Posterior cingulate gyrus (tissue), 11 donors: ENCODE measurements at regions of chr6 and their contacts with region 1.

Region 1: GRCh38 chr6:44237813-44238433 is 9.0 kb upstream of the HSP90AB1 start:
- DNase-seq: peak; percentile 56 to 97 (median 84)

Region 2: DNA sequence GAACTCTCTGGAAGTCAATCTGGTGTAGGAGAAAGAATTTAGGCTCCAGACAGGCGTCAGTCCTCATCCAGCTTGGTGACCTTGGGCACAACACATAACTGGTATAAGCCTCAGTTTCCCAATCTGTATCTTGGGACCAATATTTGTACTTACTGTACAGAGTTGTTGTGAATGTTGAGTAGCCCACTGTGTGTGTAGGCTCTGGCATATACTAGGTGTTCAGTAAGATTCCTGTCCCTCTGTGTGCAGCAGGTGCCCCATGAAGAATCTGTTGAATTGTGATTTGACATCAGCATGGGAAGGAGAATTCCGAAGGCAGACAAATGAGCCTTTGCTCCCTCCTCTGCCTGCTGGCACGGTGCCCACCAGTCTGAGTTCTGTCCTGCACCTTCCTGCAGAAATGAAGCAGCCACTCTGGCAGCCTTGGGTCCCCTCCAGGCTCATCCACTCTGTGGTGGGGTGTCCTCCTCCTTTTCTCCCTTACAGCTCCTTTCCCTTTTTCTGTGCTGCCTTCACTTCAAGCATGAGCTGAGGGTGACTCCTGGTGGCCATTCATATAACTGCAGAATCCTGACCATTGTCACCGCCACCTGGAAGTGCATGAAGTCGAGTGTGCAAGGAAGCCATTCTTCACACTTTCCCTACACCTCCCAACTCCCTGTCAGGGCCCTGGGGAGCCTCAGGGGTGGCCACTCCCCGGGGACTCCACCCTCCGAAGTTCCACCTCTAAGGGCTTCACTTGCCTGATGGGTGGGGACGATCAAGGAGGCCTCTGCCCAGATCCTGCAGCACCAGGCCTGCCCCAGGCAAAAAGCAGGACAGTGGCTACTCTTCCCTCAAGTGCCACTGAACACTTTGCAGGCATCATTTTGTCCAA is 158.9 kb before region 1 on chr6:
- intact Hi-C with region 1: no loop called
- DNase-seq: peak; percentile 53 to 94 (median 80)

Region 3: DNA sequence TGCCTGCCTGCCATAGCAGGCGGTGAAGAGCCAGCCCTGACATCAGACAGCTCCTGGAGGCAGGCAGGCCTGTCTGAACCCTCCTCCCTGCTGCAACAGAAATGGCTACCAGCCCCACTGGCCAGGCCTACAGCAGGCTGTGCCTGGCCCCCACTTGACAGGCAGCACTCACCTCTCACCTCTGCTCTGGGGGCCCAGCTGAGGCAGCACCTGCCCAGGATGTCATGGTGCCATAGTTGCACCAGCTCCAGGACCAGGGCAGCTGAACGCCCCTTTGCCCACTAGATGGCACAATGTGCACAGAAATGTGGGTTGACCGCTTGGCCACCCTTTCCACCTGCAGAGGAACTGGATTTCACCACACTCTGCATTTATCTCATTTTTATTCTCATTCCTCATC is 141.3 kb before region 1 on chr6:
- intact Hi-C with region 1: loop called (anchors 5 kb)
- DNase-seq: peak; percentile 63 to 96 (median 78)

Region 4: GRCh38 chr6:44172731-44173500 is 65.0 kb before region 1 on chr6:
- intact Hi-C with region 1: loop called (anchors 1 kb)
- DNase-seq: peak; percentile 65 to 97 (median 85)

Region 5: GRCh38 chr6:44192428-44193041 is 45.4 kb before region 1 on chr6:
- intact Hi-C with region 1: no loop called
- DNase-seq: peak in 1 of 10 donors; percentile 45

Region 6: DNA sequence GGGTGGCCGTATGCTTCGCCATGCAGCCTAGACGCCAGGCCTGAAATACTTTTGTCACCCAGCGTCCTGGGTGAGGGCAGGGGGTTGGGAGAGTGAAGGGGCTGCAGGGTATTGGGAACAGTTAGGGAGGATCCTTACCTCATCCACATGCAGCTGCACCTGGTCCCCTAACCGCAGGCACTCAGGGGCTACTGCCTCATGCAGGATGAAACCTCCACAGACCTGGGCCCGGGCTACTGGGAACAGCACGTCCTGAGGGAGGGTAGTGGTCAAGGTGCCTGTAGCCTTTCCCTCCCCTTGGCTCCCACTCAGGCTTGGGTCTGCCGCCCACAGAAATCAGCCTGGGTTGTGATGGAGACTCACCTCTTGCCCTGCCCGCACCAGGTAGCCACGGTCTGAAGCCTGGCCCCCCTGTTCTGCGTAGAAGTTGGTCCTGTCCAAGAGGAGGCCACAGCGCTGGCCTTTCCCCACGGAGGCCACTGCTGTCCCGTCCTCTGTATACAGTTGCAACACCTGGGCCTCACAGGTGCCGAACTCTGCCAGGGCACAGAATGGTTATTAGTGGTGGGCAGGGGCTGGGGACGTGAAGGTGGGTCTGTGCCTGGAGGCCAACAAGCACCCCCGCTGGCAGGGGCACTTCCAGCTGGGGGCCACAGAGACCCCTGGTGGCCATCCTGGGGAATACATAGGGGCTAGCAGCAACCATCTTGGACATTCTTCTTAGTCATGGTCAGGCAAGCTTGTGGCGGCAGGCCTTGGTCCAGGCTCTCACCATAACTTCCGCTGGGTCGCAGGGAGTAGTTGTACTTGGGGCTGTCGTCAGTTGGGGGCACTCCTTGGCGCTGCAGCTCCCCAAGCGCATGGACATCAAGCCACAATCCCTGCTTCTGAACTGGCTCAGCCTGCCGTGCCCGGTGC is 66.6 kb after region 1 on chr6:
- intact Hi-C with region 1: no loop called
- DNase-seq: peak in 6 of 10 donors; percentile 45 to 94 (median 52)

Region 7: GRCh38 chr6:44353336-44353735 is 115.4 kb after region 1 on chr6:
- intact Hi-C with region 1: no loop called
- DNase-seq: no peak